ENCODE measurements at regions of chr5 and their contacts with region 1.

Region 1: GRCh38 chr5:154802050-154802449 is 46.9 kb downstream of the LARP1 start:
- DNase-seq: no peak
- ATAC-seq: no peak
- H3K4me3 ChIP-seq: no peak overlapping the region
- H3K4me3 Mint-ChIP-seq: no peak overlapping the region
- H3K27ac ChIP-seq: no peak overlapping the region
- H3K27ac Mint-ChIP-seq: peak overlapping the region; percentile 43
- H3K4me1 ChIP-seq: no peaks in the 10 kb centered on the region
- H3K4me1 Mint-ChIP-seq: no peaks in the 10 kb centered on the region
- H3K27me3 ChIP-seq: no peaks in the 10 kb centered on the region
- H3K27me3 Mint-ChIP-seq: no peaks in the 10 kb centered on the region
- CTCF ChIP-seq: no peak

Region 2: GRCh38 chr5:154729613-154730012 is 72.4 kb before region 1 on chr5:
- CTCF ChIA-PET with region 1: no interaction called
- POLR2A ChIA-PET with region 1: no interaction called
- intact Hi-C with region 1: no loop called
- DNase-seq: no peak
- ATAC-seq: no peak
- H3K4me3 ChIP-seq: no peak overlapping the region
- H3K4me3 Mint-ChIP-seq: no peak overlapping the region
- H3K27ac ChIP-seq: no peak overlapping the region
- H3K27ac Mint-ChIP-seq: no peak overlapping the region
- H3K4me1 ChIP-seq: no peaks in the 10 kb centered on the region
- H3K4me1 Mint-ChIP-seq: no peaks in the 10 kb centered on the region
- H3K27me3 ChIP-seq: no peaks in the 10 kb centered on the region
- H3K27me3 Mint-ChIP-seq: no peaks in the 10 kb centered on the region
- CTCF ChIP-seq: no peak

Region 3: GRCh38 chr5:154780128-154780527 is 21.9 kb before region 1 on chr5:
- CTCF ChIA-PET with region 1: interaction called, 3 read pairs
- POLR2A ChIA-PET with region 1: no interaction called
- intact Hi-C with region 1: loop called in 1 of 2 experiments (anchors 2 kb)
- DNase-seq: no peak
- ATAC-seq: no peak
- H3K4me3 ChIP-seq: no peak overlapping the region
- H3K4me3 Mint-ChIP-seq: no peak overlapping the region
- H3K27ac ChIP-seq: no peak overlapping the region
- H3K27ac Mint-ChIP-seq: peak overlapping the region; percentile 70
- H3K4me1 ChIP-seq: peaks cover 62% of the 10 kb centered on the region
- H3K4me1 Mint-ChIP-seq: peaks cover 84% of the 10 kb centered on the region
- H3K27me3 ChIP-seq: no peaks in the 10 kb centered on the region
- H3K27me3 Mint-ChIP-seq: no peaks in the 10 kb centered on the region
- CTCF ChIP-seq: no peak

Region 4: DNA sequence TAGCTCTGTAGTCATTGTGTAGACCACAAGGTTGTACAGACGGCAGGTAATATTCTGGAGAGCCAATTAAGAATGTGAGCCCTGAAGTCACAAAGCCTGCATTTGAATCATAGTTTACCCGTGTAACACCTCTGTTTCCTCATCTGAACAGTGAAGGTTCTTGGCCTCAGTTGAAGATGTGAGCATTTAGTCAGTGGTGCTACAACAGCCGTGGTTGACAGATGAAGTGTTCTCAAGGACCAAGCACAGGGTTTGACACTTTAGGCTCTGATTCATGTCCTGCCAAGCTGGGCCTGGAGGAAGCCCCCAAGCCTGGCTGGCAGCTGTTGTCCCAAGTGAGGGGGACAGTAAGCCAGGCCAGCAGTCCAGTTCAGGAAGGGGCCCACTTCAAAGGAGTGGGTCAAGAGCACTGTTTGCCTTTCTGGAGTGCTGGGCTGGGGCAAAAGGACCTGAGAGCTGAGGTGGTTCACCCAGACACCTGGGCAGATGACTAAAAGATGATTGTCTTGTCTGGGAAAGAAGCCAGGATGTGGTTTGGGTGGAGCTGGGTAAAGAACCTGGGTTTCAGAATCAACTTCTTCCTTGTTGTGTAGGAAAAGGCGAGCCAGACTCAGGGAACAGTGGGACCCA is 27.7 kb after region 1 on chr5:
- CTCF ChIA-PET with region 1: no interaction called
- POLR2A ChIA-PET with region 1: no interaction called
- intact Hi-C with region 1: no loop called
- DNase-seq: peak in 12 of 14 experiments; percentile 6 to 70 (median 30)
- ATAC-seq: peak; percentile 76
- H3K4me3 ChIP-seq: peak overlapping the region; percentile 6
- H3K4me3 Mint-ChIP-seq: peak overlapping the region; percentile 68
- H3K27ac ChIP-seq: peak overlapping the region; percentile 63 to 82
- H3K27ac Mint-ChIP-seq: peak overlapping the region; percentile 93
- H3K4me1 ChIP-seq: peaks cover 37% of the 10 kb centered on the region
- H3K4me1 Mint-ChIP-seq: peaks cover 56% of the 10 kb centered on the region
- H3K27me3 ChIP-seq: no peaks in the 10 kb centered on the region
- H3K27me3 Mint-ChIP-seq: no peaks in the 10 kb centered on the region
- CTCF ChIP-seq: no peak

Region 5: DNA sequence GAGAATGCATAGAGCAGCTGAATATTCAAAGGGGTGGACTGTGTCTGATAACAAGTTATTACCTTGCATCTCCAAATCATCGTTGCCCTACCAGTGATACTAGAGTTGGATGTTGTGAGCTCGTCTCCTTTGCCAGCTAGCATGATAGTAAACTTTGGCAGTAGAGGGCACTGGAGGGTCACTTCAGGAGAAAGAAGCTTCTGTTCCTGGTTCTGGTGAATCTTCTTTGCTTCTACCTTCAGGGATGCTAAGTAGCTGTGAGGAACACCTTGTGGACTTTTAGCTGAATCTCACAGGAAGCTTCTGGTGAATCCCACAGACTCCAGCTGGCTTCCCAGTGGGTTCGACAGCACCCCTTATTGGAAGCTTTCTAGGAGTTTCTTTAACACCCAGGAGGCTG is 898.3 kb after region 1 on chr5:
- CTCF ChIA-PET with region 1: no interaction called
- POLR2A ChIA-PET with region 1: no interaction called
- intact Hi-C with region 1: no loop called
- DNase-seq: peak in 3 of 14 experiments; percentile 12 to 31 (median 12)
- ATAC-seq: no peak
- H3K4me3 ChIP-seq: no peak overlapping the region
- H3K4me3 Mint-ChIP-seq: no peak overlapping the region
- H3K27ac ChIP-seq: no peak overlapping the region
- H3K27ac Mint-ChIP-seq: no peak overlapping the region
- H3K4me1 ChIP-seq: no peaks in the 10 kb centered on the region
- H3K4me1 Mint-ChIP-seq: no peaks in the 10 kb centered on the region
- H3K27me3 ChIP-seq: no peaks in the 10 kb centered on the region
- H3K27me3 Mint-ChIP-seq: no peaks in the 10 kb centered on the region
- CTCF ChIP-seq: no peak